PC-9 (cell line): ENCODE measurements at regions of chr6 and their contacts with region 1.

Region 1: DNA sequence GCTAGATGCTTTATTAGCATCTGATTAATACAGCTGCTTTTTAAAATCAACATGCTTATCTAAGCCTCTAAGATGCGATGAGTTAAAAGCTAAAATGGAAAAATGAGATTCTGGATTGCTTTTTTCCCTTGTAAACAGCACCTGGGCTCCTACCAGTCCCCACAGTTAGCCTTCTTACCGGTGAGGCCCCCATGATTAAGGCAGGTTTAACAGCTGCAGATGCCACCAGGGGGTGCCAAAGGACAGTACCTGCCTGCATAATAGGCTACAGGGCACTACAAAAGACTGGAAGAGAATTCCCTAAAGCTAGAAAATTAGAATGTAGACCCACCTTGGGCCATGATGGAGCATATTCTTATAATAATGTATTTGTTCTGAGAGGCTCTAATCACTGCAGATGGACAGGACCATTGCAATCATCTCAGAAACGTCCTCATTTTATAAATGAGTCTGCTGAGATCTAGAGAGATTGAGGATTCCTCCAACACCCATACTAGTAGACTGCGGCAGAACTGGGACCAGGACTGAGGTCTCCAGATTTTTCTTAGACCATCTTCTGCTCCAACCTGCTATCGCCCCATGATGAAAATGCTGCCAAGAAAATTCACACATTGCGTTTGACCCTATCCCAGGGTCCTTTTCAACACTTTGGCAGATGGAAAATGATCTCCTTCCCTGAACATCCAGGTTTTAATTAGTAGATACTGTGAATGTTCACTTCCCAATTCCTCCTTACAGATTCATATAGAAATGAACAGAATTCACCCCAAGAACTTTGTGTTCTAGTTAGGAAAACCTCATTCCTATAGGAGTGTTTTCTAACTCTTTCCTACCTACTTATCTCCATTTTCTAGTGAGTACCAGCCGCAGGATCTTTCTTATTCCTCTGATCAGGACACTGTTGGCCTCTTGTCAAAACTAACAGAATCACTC is 148.8 kb downstream of the RPS12 start:
- DNase-seq: peak; percentile 61 to 65
- H3K4me3 ChIP-seq: no peak overlapping the region
- H3K27ac ChIP-seq: no peak overlapping the region
- H3K4me1 ChIP-seq: peaks cover 29% of the 10 kb centered on the region
- H3K27me3 ChIP-seq: no peaks in the 10 kb centered on the region
- CTCF ChIP-seq: peak; percentile 92

Region 2: DNA sequence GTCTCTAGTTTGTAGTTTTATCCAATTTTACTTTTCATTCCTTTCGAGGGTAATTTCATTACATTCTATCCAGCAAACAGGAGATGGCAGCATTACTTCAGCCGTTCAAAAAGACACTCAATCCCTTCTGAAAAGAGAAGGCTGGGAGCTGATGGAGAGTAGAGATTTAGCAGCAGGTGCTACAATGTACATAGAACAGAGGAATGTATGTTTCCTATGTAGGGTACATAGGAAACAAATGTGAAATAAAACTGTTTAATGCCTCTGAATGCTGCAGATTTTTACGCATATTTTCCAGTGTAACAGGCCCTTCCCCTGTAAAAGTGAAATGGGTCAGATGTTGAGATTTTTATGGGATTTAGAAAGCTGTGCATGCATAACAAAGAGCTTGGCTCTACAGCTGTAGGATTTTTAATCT is 132.9 kb before region 1 on chr6:
- CTCF ChIA-PET with region 1: interaction called, 3 read pairs
- POLR2A ChIA-PET with region 1: no interaction called
- intact Hi-C with region 1: loop called (anchors 1 kb)
- DNase-seq: no peak
- H3K4me3 ChIP-seq: no peak overlapping the region
- H3K27ac ChIP-seq: no peak overlapping the region
- H3K4me1 ChIP-seq: no peaks in the 10 kb centered on the region
- H3K27me3 ChIP-seq: no peaks in the 10 kb centered on the region
- CTCF ChIP-seq: peak; percentile 85

Region 3: GRCh38 chr6:133241086-133241900 is 278.1 kb after region 1 on chr6 and contains the start of gene EYA4:
- CTCF ChIA-PET with region 1: no interaction called
- POLR2A ChIA-PET with region 1: no interaction called
- intact Hi-C with region 1: loop called (anchors 5 kb)
- DNase-seq: peak in 1 of 2 experiments; percentile 57
- H3K4me3 ChIP-seq: peak within 1 kb of the TSS; percentile 69
- H3K27ac ChIP-seq: peak within 1 kb of the TSS; percentile 21
- H3K4me1 ChIP-seq: peaks cover 19% of the 10 kb centered on the region
- H3K27me3 ChIP-seq: peaks cover 26% of the 10 kb centered on the region; the same call in 1 of the 2 replicates
- CTCF ChIP-seq: no peak
- total RNA-seq, gene EYA4: 9.8 and 10.6 TPM in 2 replicates

Region 4: GRCh38 chr6:133512410-133513016 is 549.3 kb after region 1 on chr6:
- CTCF ChIA-PET with region 1: interaction called, 3 read pairs
- POLR2A ChIA-PET with region 1: no interaction called
- intact Hi-C with region 1: loop called (anchors 1 kb)
- DNase-seq: peak in 1 of 2 experiments; percentile 45
- H3K4me3 ChIP-seq: no peak overlapping the region
- H3K27ac ChIP-seq: no peak overlapping the region
- H3K4me1 ChIP-seq: no peaks in the 10 kb centered on the region
- H3K27me3 ChIP-seq: no peaks in the 10 kb centered on the region
- CTCF ChIP-seq: peak; percentile 93

Region 5: DNA sequence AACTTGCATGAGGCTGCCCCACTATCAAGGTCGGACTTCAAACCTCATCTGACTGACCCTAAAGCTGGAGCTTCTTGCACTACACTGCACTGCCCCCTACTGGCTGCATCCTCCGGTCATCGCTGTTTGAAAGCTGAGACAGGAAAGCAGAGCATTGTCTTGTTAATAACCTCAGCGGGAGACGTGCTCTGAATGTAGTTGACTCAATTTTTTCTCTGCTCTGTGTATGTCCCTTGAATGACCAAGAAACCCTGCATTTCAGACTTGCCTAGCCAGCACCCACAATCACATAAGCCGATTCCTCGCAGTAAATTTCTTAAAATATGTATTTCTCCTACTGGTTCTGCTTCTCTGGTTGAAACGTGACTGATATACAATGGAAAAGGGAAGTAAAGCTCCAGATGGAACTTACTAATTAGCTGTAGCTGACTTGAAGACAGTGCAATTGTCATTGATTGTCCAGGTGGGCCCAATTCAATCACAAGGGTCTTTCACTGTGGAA is 953.5 kb after region 1 on chr6:
- CTCF ChIA-PET with region 1: no interaction called
- POLR2A ChIA-PET with region 1: no interaction called
- intact Hi-C with region 1: loop called (anchors 1 kb)
- DNase-seq: peak; percentile 71 to 82
- H3K4me3 ChIP-seq: peak overlapping the region; percentile 6; the same call in 1 of the 2 replicates
- H3K27ac ChIP-seq: no peak overlapping the region
- H3K4me1 ChIP-seq: no peaks in the 10 kb centered on the region
- H3K27me3 ChIP-seq: no peaks in the 10 kb centered on the region
- CTCF ChIP-seq: peak; percentile 100